PC-9 (cell line): ENCODE measurements at regions of chr5 and their contacts with region 1.

Region 1: DNA sequence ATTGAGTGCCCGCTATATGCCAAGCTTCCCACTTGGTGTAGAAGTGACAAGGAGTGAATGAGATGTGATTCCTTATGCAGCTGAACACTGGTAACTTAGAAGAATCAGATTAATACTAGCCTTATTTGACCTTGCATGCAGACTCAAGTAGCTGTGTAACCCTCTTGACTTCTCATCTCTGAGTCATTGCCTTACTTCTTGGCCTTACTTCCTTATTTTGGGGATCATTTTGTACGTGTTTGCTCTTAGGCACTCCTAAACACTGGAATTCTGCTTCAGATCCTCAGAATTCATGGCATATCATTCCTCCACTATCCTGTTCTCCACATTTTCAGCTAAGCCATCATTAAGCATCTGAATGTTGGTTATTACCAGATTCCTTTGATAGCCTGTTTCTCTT is 948.9 kb upstream of the ARRDC3 start:
- DNase-seq: no peak
- H3K4me3 ChIP-seq: no peak overlapping the region
- H3K27ac ChIP-seq: no peak overlapping the region
- H3K4me1 ChIP-seq: 0 out of 2 replicates have a peak, but pooled peaks cover 5% of the 10 kb centered on the region
- H3K27me3 ChIP-seq: no peaks in the 10 kb centered on the region
- CTCF ChIP-seq: no peak

Region 2: GRCh38 chr5:91417219-91417618 is 914.8 kb before region 1 on chr5:
- CTCF ChIA-PET with region 1: no interaction called
- POLR2A ChIA-PET with region 1: no interaction called
- intact Hi-C with region 1: no loop called
- DNase-seq: no peak
- H3K4me3 ChIP-seq: no peak overlapping the region
- H3K27ac ChIP-seq: no peak overlapping the region
- H3K4me1 ChIP-seq: no peaks in the 10 kb centered on the region
- H3K27me3 ChIP-seq: no peaks in the 10 kb centered on the region
- CTCF ChIP-seq: no peak

Region 3: GRCh38 chr5:92378966-92379611 is 47.0 kb after region 1 on chr5:
- CTCF ChIA-PET with region 1: no interaction called
- POLR2A ChIA-PET with region 1: no interaction called
- intact Hi-C with region 1: no loop called
- DNase-seq: no peak
- H3K4me3 ChIP-seq: no peak overlapping the region
- H3K27ac ChIP-seq: no peak overlapping the region
- H3K4me1 ChIP-seq: no peaks in the 10 kb centered on the region
- H3K27me3 ChIP-seq: no peaks in the 10 kb centered on the region
- CTCF ChIP-seq: no peak

Region 4: GRCh38 chr5:92613546-92613945 is 281.5 kb after region 1 on chr5:
- CTCF ChIA-PET with region 1: no interaction called
- POLR2A ChIA-PET with region 1: no interaction called
- intact Hi-C with region 1: no loop called
- DNase-seq: no peak
- H3K4me3 ChIP-seq: no peak overlapping the region
- H3K27ac ChIP-seq: no peak overlapping the region
- H3K4me1 ChIP-seq: no peaks in the 10 kb centered on the region
- H3K27me3 ChIP-seq: no peaks in the 10 kb centered on the region
- CTCF ChIP-seq: no peak

Region 5: GRCh38 chr5:94066437-94067207 is 1734.6 kb after region 1 on chr5:
- CTCF ChIA-PET with region 1: no interaction called
- POLR2A ChIA-PET with region 1: no interaction called
- intact Hi-C with region 1: loop called (anchors 5 kb)
- DNase-seq: no peak
- H3K4me3 ChIP-seq: no peak overlapping the region
- H3K27ac ChIP-seq: no peak overlapping the region
- H3K4me1 ChIP-seq: no peaks in the 10 kb centered on the region
- H3K27me3 ChIP-seq: no peaks in the 10 kb centered on the region
- CTCF ChIP-seq: no peak